Heart right ventricle (tissue), 16 donors: ENCODE measurements at regions of chr11 and their contacts with region 1.

Region 1: DNA sequence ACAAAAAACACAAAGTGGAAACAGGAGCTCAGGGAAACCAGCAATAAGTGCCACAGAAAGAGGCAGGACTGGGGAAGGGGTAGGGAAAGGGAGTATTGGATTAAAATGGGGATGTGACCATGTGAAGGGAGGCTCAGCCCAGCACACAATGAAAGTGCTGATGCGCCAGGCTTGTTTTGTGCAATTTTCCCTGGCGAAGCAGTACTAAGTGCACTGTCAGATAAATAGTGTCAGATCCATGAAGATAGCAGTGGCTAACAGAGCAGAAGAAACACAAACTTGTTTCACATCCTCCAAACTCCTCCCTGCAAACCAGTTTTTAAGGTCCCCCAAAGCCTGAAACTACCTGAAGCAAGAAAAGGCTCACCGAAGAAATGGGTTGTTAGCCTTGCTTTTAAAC is 50.7 kb upstream of the RAPSN start:
- DNase-seq: no peak
- ATAC-seq: peak in 7 of 8 donors; percentile 40 to 80 (median 51)
- H3K4me3 ChIP-seq: no peak overlapping the region
- H3K27ac ChIP-seq: peak overlapping the region in 4 of 10 donors; percentile 27 to 82 (median 38)
- H3K4me1 ChIP-seq: peaks cover 13 to 82% (median 74%) of the 10 kb centered on the region in 9 donors
- H3K27me3 ChIP-seq: no peaks in the 10 kb centered on the region
- CTCF ChIP-seq: no peak

Region 2: DNA sequence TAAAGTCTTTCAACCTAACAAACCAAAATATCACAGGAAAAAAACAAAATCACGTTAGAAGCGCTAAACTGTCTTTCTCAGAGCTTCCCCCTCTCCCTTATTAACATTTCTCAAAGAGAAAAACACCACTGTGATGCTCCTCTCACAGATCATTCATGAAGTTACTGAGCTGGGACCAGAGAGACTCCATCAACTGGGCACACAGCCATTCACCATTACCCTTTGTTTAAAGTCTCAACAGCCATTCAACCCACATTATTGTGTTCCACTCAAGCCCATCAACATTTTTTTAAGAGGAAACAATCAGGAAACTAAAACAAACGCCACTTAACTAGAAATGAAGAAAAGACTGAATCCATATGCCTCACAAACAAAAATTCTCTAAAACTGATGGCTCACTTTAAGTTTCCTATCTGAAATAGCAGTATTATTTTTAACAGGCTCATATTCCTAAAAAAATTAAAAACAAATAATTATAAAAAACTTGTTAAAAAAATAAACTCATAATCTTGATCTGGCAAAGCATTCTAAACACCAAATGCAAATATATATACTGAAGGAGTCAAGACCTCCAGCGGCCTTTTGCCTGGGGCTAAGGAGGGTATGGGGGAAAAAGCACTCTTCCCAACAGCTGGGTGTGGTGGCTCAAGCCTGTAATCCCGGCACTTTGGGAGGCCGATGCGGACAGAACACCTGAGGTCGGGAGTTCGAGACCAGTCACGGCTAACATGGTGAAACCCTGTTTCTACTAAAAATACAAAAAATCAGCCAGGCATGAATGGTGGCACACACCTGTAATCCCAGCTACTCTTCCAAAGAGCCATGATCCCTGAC is 39.3 kb after region 1 on chr11:
- intact Hi-C with region 1: loop called in 1 of 10 experiments (anchors 5 kb)
- DNase-seq: no peak
- ATAC-seq: peak in 2 of 8 donors; percentile 34 to 39
- H3K4me3 ChIP-seq: no peak overlapping the region
- H3K27ac ChIP-seq: peak overlapping the region in 2 of 10 donors; percentile 44 to 54
- H3K4me1 ChIP-seq: peaks cover 12 to 93% (median 75%) of the 10 kb centered on the region in 9 donors
- H3K27me3 ChIP-seq: no peaks in the 10 kb centered on the region
- CTCF ChIP-seq: no peak

Region 3: DNA sequence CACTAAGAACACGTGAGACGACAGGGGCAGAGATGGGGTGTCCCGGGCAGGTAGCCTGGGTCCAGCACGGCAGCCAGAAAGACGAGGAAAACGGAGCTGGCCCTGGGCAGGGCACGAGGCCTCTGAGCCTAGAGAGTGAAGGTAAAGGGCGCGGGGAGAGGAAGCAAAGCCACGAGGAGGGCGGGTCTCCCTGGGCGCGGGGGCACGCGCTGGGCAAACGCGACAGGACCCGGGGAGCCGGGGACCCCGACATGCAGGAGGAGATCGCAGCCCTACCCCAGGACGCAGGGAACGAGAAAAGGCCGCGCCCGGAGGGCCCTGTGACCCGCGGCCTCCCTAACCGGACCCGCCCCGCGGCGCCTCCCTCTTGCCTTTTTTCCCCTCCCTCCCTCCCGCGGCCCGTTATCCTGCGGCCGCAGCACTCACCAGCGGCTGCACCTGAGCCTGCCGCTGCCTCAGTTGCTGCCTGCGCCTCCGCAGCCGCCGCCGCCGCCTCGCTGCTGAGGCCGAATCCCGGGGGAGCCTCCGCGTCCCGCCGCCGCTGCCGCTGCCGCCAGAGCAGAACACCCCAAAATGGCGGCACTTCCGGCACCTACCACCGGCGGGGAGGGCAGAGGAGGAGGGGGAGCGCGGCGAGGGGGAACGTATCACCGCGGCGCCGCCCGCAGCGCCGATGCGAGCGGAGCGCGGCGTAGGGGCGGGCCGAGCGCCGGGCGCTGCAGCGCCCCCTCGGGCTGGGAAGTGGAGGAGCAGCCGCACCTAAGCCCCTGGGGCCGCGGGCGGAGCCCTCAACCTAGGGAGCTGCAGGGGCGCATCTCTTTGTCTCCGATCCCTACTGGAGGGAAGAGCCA is 53.2 kb after region 1 on chr11 and contains the start of gene CELF1:
- intact Hi-C with region 1: loop called in 2 of 10 experiments (anchors 10 kb)
- DNase-seq: peak; percentile 91 to 92
- ATAC-seq: peak; percentile 98 to 100 (median 98)
- H3K4me3 ChIP-seq: peak within 1 kb of the TSS; percentile 83 to 99 (median 94)
- H3K27ac ChIP-seq: peak within 1 kb of the TSS; percentile 82 to 97 (median 94)
- H3K4me1 ChIP-seq: peaks cover 4 to 48% (median 42%) of the 10 kb centered on the region in 9 donors
- H3K27me3 ChIP-seq: no peaks in the 10 kb centered on the region
- CTCF ChIP-seq: peak; percentile 84 to 99 (median 94)
- total RNA-seq, gene CELF1: 68.3 to 97.0 (median 87.7) TPM

Region 4: GRCh38 chr11:47565340-47566148 is 65.9 kb after region 1 on chr11 and contains the start of gene PTPMT1:
- intact Hi-C with region 1: no loop called
- DNase-seq: peak; percentile 75 to 81
- ATAC-seq: peak; percentile 94 to 98 (median 96)
- H3K4me3 ChIP-seq: peak within 1 kb of the TSS; percentile 75 to 99 (median 92)
- H3K27ac ChIP-seq: peak within 1 kb of the TSS in 9 of 10 donors; percentile 67 to 91 (median 86)
- H3K4me1 ChIP-seq: peaks cover 5 to 26% (median 14%) of the 10 kb centered on the region in 9 donors
- H3K27me3 ChIP-seq: no peaks in the 10 kb centered on the region
- CTCF ChIP-seq: no peak
- total RNA-seq, gene PTPMT1: 16.9 to 24.6 (median 21.3) TPM

Region 5: GRCh38 chr11:47616726-47617416 is 117.3 kb after region 1 on chr11:
- intact Hi-C with region 1: loop called in 1 of 10 experiments (anchors 10 kb)
- DNase-seq: peak in 1 of 2 donors; percentile 66
- ATAC-seq: peak; percentile 59 to 90 (median 82)
- H3K4me3 ChIP-seq: no peak overlapping the region
- H3K27ac ChIP-seq: peak overlapping the region in 1 of 10 donors; percentile 37
- H3K4me1 ChIP-seq: peaks cover 0 to 11% (median 0%) of the 10 kb centered on the region in 9 donors
- H3K27me3 ChIP-seq: no peaks in the 10 kb centered on the region
- CTCF ChIP-seq: peak; percentile 46 to 82 (median 76)